Right ventricle myocardium inferior (tissue), 1 donor: ENCODE measurements at regions of chr7 and their contacts with region 1.

Region 1: DNA sequence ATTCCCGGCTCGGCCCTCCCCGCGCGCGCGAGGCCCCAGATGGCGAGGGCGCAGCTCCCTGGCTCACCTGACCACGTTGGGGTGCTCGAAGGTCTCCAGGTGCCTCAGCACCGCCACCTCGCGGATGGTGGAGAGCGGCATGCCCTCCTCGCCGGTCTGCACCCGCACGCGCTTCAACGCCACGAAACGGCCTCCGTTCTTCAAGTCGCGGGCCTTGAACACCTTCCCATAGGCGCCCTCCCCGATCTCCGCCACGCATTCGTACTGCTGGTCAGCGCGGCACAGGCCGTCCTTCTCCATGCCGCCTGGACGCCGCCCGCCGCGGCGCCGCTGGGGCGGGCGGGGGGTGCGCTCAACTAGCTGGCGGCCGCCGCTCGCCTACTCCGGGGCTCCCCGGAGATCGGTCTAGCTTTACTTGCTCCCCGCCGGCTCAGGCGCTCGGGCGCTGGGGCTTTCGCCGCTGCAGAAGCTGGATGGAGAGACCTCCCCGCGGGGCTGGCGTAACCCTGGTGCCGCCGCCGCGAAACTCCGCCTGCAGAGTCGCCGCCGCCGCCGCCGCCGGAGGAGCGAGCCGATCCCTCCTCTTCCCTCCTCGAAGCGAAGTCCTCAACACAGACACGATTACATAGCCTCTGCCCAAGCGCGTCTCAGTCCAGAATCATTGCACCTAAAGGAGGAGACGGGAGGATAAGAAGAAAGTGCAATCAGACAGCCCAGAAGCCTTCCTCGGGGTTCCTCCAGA is 3.2 kb downstream of the CDK6 start:
- DNase-seq: peak; percentile 94
- ATAC-seq: peak; percentile 80

Region 2: GRCh38 chr7:92359801-92360200 is 473.4 kb before region 1 on chr7:
- intact Hi-C with region 1: no loop called
- DNase-seq: no peak
- ATAC-seq: no peak

Region 3: DNA sequence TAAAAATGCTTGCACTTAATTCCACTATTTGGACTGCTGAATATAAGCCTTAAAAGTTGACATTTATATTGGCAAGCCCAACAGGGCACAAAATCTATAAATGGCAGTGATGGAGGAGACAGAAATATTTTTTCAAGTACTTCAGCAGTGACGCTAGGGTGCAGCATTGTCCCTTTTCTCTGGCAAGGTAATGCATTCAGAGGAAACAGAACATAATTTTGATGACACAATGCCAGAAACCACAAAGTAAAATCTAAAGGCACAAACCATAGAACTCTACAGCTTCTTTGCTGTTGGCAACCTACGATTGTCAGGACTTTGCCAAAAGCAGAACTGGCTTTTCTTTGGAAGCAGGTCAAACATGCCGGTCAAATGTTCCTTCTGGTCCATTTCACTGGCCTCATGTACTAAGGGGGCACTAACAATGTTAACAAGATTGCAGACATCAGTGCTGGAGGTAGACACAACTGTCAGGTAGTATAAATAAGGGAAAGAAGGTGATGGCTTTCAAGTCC is 212.1 kb before region 1 on chr7:
- intact Hi-C with region 1: loop called (anchors 1 kb)
- DNase-seq: no peak
- ATAC-seq: peak; percentile 76

Region 4: GRCh38 chr7:92768501-92769393 is 64.4 kb before region 1 on chr7:
- intact Hi-C with region 1: loop called (anchors 5 kb)
- DNase-seq: no peak
- ATAC-seq: no peak

Region 5: GRCh38 chr7:92880212-92881090 is 47.3 kb after region 1 on chr7:
- intact Hi-C with region 1: loop called (anchors 5 kb)
- DNase-seq: no peak
- ATAC-seq: peak; percentile 34

Region 6: GRCh38 chr7:93147363-93147762 is 314.2 kb after region 1 on chr7:
- intact Hi-C with region 1: no loop called
- DNase-seq: no peak
- ATAC-seq: peak; percentile 72